ENCODE measurements at regions of chr1 and their contacts with region 1.

Region 1: GRCh38 chr1:29235955-29236684 is at the start of gene PTPRU:
- DNase-seq: peak; percentile 65
- H3K4me3 Mint-ChIP-seq: peak within 1 kb of the TSS; percentile 93
- H3K27ac Mint-ChIP-seq: peak within 1 kb of the TSS; percentile 61
- H3K4me1 Mint-ChIP-seq: peaks cover 27% of the 10 kb centered on the region
- H3K27me3 Mint-ChIP-seq: peaks cover 14% of the 10 kb centered on the region
- CTCF ChIP-seq: peak; percentile 84
- total RNA-seq, gene PTPRU: 24.1 and 26.8 TPM in 2 replicates

Region 2: DNA sequence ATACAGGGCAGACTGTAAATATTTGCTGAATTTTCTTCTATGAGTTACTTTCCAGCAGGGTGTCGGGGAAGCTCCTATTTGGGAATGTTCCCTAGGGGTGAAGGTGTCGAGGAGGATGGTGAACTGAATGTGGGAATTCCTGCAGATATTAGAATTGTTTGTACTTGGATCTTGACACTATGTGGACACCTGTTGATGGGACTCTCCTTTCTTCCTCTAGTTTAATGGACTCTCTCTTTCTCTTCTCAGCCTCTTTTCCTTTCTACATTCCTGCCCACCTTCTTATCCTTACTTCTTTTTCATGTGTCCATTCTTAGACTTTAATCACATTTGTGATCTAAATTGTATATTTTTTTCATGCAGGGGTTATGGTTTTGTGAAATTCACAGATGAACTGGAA is 669.2 kb before region 1 on chr1:
- CTCF ChIA-PET with region 1: no interaction called
- POLR2A ChIA-PET with region 1: no interaction called
- intact Hi-C with region 1: no loop called
- DNase-seq: no peak
- H3K4me3 Mint-ChIP-seq: no peak overlapping the region
- H3K27ac Mint-ChIP-seq: no peak overlapping the region
- H3K4me1 Mint-ChIP-seq: no peaks in the 10 kb centered on the region
- H3K27me3 Mint-ChIP-seq: no peaks in the 10 kb centered on the region
- CTCF ChIP-seq: no peak

Region 3: DNA sequence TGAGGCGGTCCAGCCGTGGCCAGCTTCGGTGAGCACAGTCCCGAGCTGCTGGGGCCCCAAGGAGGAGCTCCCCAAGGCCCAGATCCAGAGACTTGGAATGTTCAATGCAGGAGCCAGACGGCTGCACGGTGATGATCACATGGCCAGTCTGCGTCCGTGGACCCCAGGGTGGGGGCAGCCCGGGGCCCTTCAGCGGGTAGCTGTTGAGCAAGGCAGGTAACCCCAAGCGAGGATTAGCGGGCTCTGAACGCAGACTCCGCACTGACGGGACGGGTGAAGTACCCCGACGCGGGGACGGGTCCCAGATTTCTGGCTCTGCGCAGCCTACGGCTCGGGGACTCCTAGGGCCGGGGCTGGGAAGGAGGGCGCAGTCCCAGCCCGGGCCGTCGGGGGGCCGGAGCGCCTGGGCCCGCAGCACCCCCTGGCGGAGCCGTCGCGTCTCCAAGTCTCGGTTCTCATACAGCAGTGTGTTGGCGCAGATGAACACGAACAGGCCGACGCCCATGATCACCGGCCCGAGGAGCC is 115.1 kb before region 1 on chr1:
- CTCF ChIA-PET with region 1: no interaction called
- POLR2A ChIA-PET with region 1: no interaction called
- intact Hi-C with region 1: no loop called
- DNase-seq: no peak
- H3K4me3 Mint-ChIP-seq: no peak overlapping the region
- H3K27ac Mint-ChIP-seq: no peak overlapping the region
- H3K4me1 Mint-ChIP-seq: peaks cover 6% of the 10 kb centered on the region
- H3K27me3 Mint-ChIP-seq: peaks cover 12% of the 10 kb centered on the region
- CTCF ChIP-seq: no peak

Region 4: DNA sequence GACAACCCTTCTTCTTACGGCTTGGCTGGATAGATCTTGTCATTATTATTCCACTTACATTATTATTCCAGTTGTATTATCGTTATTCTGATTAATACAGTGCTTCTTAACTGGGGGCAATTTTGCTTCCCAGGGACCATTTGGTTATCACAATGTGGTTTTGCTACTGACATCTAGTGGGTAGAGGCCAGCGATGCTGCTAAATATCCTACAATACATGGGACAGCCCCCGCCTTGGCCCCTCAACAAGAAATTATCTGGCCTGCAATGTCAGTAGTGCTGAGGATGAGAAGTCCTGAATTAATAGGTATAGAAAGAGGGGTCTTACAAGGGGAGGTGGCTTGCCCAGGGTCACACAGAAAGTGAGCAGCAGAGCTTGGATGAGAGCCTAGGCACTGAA is 105.8 kb after region 1 on chr1:
- CTCF ChIA-PET with region 1: interaction called, 3 read pairs
- POLR2A ChIA-PET with region 1: no interaction called
- intact Hi-C with region 1: loop called (anchors 5 kb)
- DNase-seq: peak; percentile 6
- H3K4me3 Mint-ChIP-seq: no peak overlapping the region
- H3K27ac Mint-ChIP-seq: no peak overlapping the region
- H3K4me1 Mint-ChIP-seq: no peaks in the 10 kb centered on the region
- H3K27me3 Mint-ChIP-seq: peaks cover 42% of the 10 kb centered on the region
- CTCF ChIP-seq: no peak

Region 5: DNA sequence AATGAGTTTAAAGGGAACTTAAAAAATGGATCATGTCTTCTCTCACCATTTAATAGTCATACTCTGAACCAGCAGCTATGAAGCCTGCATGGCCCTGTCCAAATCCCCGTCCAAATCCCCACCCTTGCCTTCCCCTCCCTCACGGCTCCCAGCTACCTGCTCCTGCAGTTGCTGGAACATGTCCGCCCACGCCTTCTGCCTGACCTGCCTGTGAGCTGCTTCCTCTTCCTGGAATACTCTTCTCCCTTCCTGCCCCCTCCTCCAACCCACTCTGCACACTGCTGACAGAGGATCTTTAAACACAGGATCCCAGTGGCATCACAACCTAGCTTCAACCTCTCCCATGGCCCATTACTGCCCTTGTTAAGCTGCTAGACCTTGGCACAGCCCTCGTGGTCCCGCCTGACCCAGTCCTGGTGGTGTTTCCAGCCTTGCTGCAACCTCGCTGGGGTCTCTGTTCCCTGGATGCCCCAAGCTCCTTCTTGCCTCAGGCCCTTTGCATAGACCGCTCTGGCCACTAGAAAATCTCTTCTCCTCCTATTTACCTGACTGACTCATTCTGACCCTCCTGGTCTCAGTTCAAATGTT is 118.5 kb after region 1 on chr1:
- CTCF ChIA-PET with region 1: no interaction called
- POLR2A ChIA-PET with region 1: no interaction called
- intact Hi-C with region 1: no loop called
- DNase-seq: peak; percentile 24
- H3K4me3 Mint-ChIP-seq: no peak overlapping the region
- H3K27ac Mint-ChIP-seq: no peak overlapping the region
- H3K4me1 Mint-ChIP-seq: peaks cover 7% of the 10 kb centered on the region
- H3K27me3 Mint-ChIP-seq: peaks cover 28% of the 10 kb centered on the region
- CTCF ChIP-seq: no peak

Region 6: DNA sequence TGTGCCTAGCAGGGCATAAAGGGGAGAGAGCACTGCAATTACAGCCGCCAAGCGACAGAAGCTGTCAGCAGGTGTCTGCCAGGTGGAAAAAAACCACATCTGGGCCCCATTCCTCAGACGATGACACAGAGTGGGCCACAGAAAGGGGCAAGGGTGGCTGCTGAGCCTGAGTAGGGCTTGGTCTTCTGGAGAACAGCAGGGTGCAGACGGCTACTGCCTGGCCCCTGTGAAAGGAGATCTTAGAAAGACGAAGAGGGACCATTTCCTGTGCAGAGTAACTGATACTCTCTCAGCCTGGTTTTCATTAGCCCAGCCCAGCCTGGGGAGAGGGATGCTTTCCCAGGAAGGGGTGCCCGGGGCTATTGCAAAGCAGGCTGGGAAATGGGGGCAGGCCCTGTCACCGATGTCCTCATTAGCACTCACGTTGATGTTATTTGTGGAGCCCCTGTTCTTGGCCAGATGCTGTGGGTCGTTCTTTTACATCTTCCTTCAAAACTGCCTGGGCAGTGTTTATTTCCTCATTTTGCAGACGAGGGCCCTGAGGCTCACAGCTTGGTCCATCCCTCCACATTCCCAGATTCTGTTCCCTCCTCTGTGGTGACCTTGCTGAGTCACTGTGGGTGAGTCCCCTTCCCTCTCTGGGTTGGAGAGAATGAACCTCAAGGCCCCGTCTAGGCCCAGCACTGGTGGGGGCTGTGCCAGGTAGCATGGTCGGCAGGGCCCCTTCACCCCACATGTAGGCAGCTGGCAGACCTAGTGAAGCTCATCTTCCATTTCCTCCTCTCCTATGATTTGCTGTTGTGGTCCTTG is 473.0 kb after region 1 on chr1:
- CTCF ChIA-PET with region 1: no interaction called
- POLR2A ChIA-PET with region 1: interaction called, 5 read pairs
- intact Hi-C with region 1: loop called (anchors 5 kb)
- DNase-seq: peak; percentile 91
- H3K4me3 Mint-ChIP-seq: peak overlapping the region; percentile 4
- H3K27ac Mint-ChIP-seq: peak overlapping the region; percentile 88
- H3K4me1 Mint-ChIP-seq: peaks cover 51% of the 10 kb centered on the region
- H3K27me3 Mint-ChIP-seq: no peaks in the 10 kb centered on the region
- CTCF ChIP-seq: no peak

Region 7: DNA sequence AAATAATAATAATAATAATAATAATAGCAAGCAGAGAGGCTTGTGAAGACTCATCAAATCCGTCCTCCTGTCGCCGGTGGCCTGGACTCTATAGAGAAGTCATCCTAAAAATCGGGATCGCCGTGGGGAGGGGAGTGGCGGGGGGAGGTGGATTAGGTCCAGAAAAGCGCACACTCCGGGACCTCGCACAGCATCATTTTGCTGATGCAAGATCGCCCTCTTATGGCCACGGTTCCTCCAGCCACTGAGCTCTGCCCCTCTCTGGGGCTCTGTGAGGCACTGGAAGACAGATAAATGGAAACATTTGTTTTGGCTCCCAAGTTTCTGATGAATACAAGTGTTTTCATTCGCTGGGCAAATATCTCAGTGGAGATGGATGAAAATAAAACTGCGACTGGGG is 875.3 kb after region 1 on chr1:
- CTCF ChIA-PET with region 1: interaction called, 4 read pairs
- POLR2A ChIA-PET with region 1: interaction called, 4 read pairs
- intact Hi-C with region 1: loop called (anchors 2 kb)
- DNase-seq: peak; percentile 57
- H3K4me3 Mint-ChIP-seq: no peak overlapping the region
- H3K27ac Mint-ChIP-seq: no peak overlapping the region
- H3K4me1 Mint-ChIP-seq: peaks cover 6% of the 10 kb centered on the region
- H3K27me3 Mint-ChIP-seq: peaks cover 72% of the 10 kb centered on the region
- CTCF ChIP-seq: peak; percentile 67

Measured in MCF 10A (cell line).